OCI-LY7 (cell line): ENCODE measurements at regions of chr6 and their contacts with region 1.

Region 1: DNA sequence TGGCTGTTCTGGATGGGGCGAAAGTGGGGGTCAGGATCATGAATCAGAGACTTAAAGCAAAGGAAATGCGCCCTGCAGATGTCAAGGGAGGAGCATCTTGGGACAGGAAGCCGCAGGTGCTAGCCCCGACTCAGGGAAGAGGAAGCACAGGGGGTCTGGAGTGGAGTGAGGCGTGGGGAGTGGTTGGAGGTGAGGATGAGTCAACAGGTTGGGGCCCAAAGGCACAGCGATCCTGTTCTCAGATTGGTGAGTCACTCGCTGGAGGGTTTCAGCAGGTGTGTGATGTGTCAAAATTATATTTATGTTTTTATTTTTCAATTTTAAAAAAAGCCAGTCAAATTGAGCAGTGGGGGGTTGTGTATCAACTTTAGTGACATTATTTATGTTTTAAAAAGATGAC is 19.0 kb downstream of the PACSIN1 start:
- DNase-seq: peak; percentile 91
- H3K4me3 ChIP-seq: peak overlapping the region; percentile 70
- H3K27ac ChIP-seq: peak overlapping the region; percentile 98
- H3K4me1 ChIP-seq: peaks cover 87% of the 10 kb centered on the region
- CTCF ChIP-seq: no peak

Region 2: DNA sequence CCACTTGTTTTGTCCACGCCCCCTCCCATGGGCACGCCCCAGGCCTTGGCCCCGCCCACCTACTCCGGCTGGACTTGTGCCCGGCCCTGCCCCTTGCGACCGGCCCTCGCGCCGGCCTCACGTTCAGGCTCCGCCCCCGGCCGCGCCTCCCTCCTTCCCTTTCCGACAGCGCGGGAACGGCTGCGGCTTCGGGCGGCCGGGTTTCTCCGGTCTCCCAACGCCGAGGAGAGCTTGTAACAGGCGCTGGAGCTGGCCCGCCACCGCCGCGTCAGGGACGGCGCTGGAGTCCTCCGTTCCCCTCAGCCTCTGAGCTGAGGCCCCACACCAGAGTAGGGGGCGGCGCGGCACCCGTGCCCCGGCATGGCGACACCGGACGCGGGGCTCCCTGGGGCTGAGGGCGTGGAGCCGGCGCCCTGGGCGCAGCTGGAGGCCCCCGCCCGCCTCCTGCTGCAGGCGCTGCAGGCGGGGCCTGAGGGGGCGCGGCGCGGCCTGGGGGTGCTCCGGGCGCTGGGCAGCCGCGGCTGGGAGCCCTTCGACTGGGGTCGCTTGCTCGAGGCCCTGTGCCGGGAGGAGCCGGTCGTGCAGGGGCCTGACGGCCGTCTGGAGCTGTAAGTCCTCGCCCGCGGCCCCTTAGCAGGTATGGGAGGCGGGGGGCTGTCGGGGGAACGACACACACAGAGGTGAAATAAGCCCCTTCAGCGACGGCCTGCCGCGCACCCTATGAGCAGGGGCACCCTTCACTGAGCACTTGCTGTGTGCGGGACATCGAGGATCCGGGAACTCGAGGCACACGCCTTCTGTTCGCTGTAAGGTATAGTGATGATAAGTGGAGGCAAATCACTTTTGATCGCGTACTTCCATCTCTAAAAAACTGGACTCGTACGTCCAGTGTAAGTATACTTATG is 967.5 kb after region 1 on chr6 and contains the start of gene FANCE:
- CTCF ChIA-PET with region 1: no interaction called
- POLR2A ChIA-PET with region 1: no interaction called
- intact Hi-C with region 1: loop called (anchors 10 kb)
- DNase-seq: peak; percentile 93
- H3K4me3 ChIP-seq: peak within 1 kb of the TSS; percentile 85
- H3K27ac ChIP-seq: peak within 1 kb of the TSS; percentile 48
- H3K4me1 ChIP-seq: peaks cover 32% of the 10 kb centered on the region
- CTCF ChIP-seq: no peak
- total RNA-seq, gene FANCE: 12.4 and 14.4 TPM in 2 replicates